Sciatic nerve (tissue), 2 donors: ENCODE measurements at regions of chr12 and their contacts with region 1.

Region 1: DNA sequence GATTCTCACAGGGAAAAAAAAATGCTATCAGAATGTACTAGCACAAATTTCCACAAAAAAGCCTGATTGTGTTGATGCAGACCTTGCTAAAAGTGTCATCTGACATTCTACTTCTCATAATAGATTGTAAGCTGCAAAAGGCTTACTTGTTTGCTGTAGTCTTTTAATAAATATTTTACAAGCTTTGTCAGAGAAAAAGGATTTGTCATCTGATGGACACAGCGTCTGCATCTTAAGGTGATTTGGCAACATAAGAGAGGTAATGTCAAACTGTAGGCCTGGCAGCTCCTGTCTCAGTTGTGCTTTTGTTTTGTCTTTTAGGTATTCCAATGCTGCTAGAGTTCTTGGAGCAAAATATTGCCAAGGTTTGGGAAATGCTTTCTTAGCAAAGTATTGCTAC is 26.3 kb upstream of the KCNH3 start:
- DNase-seq: no peak
- ATAC-seq: no peak

Region 2: DNA sequence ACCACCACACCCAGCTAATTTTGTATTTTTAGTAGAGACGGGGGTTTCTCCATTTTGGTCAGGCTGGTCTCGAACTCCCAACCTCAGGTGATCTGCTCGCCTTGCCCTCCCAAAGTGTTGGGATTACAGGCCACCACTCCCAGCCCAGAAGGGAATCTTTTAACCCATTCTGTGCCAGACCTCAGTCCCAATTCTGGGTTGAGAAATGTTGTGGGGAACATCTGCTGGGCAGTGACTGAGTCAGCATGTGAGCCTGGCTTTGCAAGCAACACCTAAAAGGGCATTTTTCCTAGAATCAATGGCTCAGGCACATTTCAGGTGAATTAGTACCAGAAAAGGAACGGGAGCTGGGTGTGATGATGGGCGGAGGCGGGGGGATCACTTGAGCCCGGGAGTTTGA is 152.9 kb before region 1 on chr12:
- intact Hi-C with region 1: loop called (anchors 2 kb)
- DNase-seq: no peak
- ATAC-seq: no peak